ENCODE measurements at regions of chr1 and their contacts with region 1.

Region 1: GRCh38 chr1:206706298-206706791 is 21.6 kb downstream of the MAPKAPK2 start:
- DNase-seq: no peak
- ATAC-seq: no peak
- H3K4me3 ChIP-seq: no peak overlapping the region
- H3K27ac ChIP-seq: no peak overlapping the region
- H3K4me1 ChIP-seq: peaks cover 60% of the 10 kb centered on the region
- H3K27me3 ChIP-seq: no peaks in the 10 kb centered on the region
- CTCF ChIP-seq: no peak
- EP300 ChIP-seq: no peak
- POLR2A ChIP-seq: no peak
- RAD21 ChIP-seq: no peak

Region 2: GRCh38 chr1:206684478-206685333 is 21.6 kb before region 1 on chr1 and contains the start of gene MAPKAPK2:
- CTCF ChIA-PET with region 1: interaction called, 16 read pairs
- POLR2A ChIA-PET with region 1: interaction called, 334 read pairs
- RAD21 ChIA-PET with region 1: interaction called, 6 read pairs
- SMC1A ChIA-PET with region 1: interaction called, 222 read pairs
- in situ Hi-C with region 1: no loop called
- intact Hi-C with region 1: loop called (anchors 2 kb)
- DNase-seq: no peak
- ATAC-seq: peak; percentile 55
- H3K4me3 ChIP-seq: peak within 1 kb of the TSS; percentile 91
- H3K27ac ChIP-seq: peak within 1 kb of the TSS; percentile 86
- H3K4me1 ChIP-seq: peaks cover 42% of the 10 kb centered on the region
- H3K27me3 ChIP-seq: no peaks in the 10 kb centered on the region
- CTCF ChIP-seq: no peak
- EP300 ChIP-seq: no peak
- POLR2A ChIP-seq: peak; percentile 64
- RAD21 ChIP-seq: no peak
- polyA plus RNA-seq, gene MAPKAPK2: 0.72 to 4.9 TPM

Region 3: GRCh38 chr1:206693029-206693428 is 13.3 kb before region 1 on chr1:
- CTCF ChIA-PET with region 1: interaction called, 19 read pairs
- POLR2A ChIA-PET with region 1: interaction called, 334 read pairs
- RAD21 ChIA-PET with region 1: interaction called, 8 read pairs
- SMC1A ChIA-PET with region 1: interaction called, 222 read pairs
- in situ Hi-C with region 1: no loop called
- intact Hi-C with region 1: no loop called
- DNase-seq: no peak
- ATAC-seq: no peak; the same call in 2 of the 3 replicates
- H3K4me3 ChIP-seq: no peak overlapping the region
- H3K27ac ChIP-seq: no peak overlapping the region
- H3K4me1 ChIP-seq: peaks cover 22% of the 10 kb centered on the region
- H3K27me3 ChIP-seq: no peaks in the 10 kb centered on the region
- CTCF ChIP-seq: no peak
- EP300 ChIP-seq: no peak
- POLR2A ChIP-seq: no peak
- RAD21 ChIP-seq: no peak